Activated naive CD4-positive, alpha-beta T cell treated with anti-CD3 and anti-CD28 coated beads for 36 hours (primary cell): ENCODE measurements at regions of chr17 and their contacts with region 1.

Region 1: DNA sequence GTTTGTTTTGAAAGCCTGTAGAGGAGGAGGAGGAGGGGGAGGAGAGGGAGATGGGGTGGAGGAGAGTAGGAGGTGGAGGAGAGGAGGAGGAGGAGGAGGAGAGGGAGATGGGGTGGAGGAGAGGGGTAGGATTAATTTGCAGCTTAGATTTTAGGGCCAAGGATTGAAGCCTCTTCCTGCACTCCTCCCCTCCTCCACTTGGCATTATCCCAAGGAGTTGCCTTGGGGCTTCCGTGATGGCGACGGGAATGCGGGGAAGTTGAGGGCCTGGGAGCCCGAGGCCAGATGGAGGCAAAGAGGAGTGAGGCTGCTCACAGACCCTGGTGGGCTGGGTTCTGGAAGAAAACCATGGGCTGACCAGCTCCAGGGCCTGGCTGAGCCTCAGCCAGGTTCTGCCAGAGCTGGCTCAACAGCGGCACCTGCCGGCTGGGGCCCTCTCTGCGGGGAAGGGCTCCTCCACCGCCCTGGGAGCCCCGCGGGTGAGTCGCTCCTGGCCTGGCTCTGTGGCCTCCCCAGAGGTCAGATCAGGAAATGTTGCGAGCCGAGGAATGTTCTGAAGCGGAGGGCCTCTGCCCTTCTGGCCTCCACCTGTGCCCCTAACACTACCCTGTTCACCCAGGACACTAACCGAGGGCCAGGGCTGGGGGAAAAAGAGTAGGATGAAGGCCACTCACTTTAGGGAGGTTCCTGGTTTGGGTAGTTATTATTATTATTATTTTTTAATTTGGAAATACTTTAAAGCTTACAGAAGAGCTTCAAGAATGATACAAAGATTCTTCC is 23.9 kb upstream of the FMNL1 start:
- DNase-seq: peak; percentile 94
- H3K4me3 Mint-ChIP-seq: no peak overlapping the region
- H3K27ac Mint-ChIP-seq: no peak overlapping the region
- H3K4me1 Mint-ChIP-seq: peaks cover 3% of the 10 kb centered on the region
- H3K27me3 Mint-ChIP-seq: no peaks in the 10 kb centered on the region

Region 2: GRCh38 chr17:44878627-44879221 is 319.0 kb before region 1 on chr17:
- CTCF ChIA-PET with region 1: no interaction called
- intact Hi-C with region 1: no loop called
- DNase-seq: peak; percentile 50
- H3K4me3 Mint-ChIP-seq: no peak overlapping the region
- H3K27ac Mint-ChIP-seq: no peak overlapping the region
- H3K4me1 Mint-ChIP-seq: no peaks in the 10 kb centered on the region
- H3K27me3 Mint-ChIP-seq: no peaks in the 10 kb centered on the region

Region 3: DNA sequence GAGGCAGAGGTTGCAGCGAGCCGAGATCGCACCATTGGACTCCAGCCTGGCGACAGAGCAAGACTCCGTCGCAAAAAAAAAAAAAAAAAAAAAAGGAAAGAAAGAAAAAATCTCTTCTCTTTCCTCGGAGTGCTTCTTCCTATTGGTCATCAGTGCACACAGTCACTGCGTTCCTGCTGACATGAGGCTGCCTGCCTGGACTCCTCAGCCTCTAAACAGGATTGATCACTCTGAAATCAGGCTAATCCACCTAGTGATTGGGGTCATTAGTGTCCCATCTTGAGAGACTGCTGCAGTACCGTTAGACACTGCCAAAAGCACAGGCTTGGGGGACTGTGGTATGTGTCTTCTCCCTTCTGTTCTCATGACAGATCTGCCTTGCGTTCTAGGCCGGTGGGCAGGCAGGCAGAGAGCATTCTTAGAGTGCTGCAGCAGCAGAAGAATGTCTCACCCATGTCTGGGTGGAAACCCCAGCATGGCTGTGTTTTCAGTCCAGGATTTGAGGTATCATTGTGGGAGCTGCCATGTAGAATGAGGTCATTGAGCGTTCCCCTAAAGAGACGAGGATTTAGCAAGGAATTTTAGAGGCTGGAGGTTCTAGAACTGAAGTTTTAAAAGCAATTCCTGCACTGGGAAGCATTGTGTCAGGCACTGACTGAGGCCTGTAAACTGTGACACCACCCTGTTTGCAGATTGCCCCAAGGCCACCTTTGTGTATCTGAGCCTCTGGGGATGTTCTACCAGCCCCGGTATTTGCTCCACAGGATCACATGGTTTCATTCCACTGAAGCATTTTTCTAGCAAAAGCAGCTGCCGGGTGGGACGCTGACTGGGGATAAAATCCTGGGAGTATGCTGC is 96.0 kb before region 1 on chr17:
- CTCF ChIA-PET with region 1: no interaction called
- intact Hi-C with region 1: no loop called
- DNase-seq: no peak
- H3K4me3 Mint-ChIP-seq: no peak overlapping the region
- H3K27ac Mint-ChIP-seq: no peak overlapping the region
- H3K4me1 Mint-ChIP-seq: no peaks in the 10 kb centered on the region
- H3K27me3 Mint-ChIP-seq: no peaks in the 10 kb centered on the region

Region 4: DNA sequence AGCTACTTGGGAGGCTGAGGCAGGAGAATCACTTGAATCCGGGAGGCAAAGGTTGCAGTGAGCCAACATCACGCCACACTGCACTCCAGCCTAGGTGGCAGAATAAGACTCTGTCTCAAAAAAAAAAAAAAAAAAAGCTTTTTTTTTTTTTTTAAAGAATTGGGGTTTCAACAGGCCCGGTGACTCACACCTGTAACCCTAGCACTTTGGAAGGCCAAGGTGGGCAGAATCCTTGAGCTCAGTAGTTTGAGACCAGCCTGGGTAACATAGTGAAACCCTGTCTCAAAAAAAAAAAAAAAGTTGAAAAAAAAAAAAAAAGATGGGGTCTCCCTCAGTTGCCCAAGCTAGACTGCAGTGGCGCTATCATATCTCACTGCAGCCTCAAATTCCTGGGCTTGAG is 42.7 kb before region 1 on chr17:
- CTCF ChIA-PET with region 1: interaction called, 82 read pairs
- intact Hi-C with region 1: no loop called
- DNase-seq: no peak
- H3K4me3 Mint-ChIP-seq: no peak overlapping the region
- H3K27ac Mint-ChIP-seq: peak overlapping the region; percentile 54
- H3K4me1 Mint-ChIP-seq: peaks cover 48% of the 10 kb centered on the region
- H3K27me3 Mint-ChIP-seq: no peaks in the 10 kb centered on the region

Region 5: DNA sequence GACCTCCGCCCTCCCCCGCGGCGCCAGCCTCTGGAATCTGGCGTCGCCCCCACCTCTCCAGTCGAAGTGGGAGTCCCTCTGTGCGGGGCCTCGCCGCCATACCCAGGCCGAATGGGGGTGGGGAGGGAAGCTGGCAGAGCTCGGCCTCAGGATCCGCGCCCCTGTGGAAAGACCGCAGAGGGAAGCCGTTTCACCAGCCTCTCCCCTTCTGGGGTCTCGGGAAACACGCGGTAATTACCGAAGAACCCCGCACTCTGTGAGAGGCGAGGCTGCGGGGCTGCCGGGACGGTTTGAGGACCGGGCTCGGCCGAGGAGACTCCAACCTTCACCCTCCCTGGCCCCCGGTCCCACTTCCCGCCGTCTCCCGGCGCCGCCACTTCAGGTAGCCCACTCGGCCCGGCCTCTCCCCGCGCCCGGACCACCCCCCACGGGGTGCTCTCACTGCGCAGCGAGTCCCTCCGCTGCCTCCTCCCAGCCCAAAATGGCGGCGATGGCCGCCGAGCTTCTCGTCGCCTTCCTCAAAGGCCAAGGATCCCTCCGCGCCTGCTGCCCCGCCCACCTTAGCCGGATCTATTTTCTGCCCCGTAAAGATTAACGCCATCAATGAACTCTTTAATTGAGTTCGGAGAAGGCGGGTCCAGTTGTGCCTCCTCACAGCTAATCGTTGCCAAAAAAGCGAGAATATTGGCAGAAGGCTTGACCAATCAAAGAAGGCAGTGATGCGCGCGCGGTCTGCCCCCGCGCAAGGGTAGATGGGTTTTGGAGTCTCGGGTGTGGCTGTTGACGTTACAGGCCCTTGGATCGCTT is 36.5 kb before region 1 on chr17:
- CTCF ChIA-PET with region 1: interaction called, 22 read pairs
- intact Hi-C with region 1: no loop called
- DNase-seq: peak; percentile 99
- H3K4me3 Mint-ChIP-seq: peak overlapping the region; percentile 96
- H3K27ac Mint-ChIP-seq: peak overlapping the region; percentile 96
- H3K4me1 Mint-ChIP-seq: peaks cover 33% of the 10 kb centered on the region
- H3K27me3 Mint-ChIP-seq: no peaks in the 10 kb centered on the region

Region 6: GRCh38 chr17:45172454-45173286 is 25.1 kb before region 1 on chr17:
- CTCF ChIA-PET with region 1: interaction called, 16 read pairs
- intact Hi-C with region 1: no loop called
- DNase-seq: peak; percentile 65
- H3K4me3 Mint-ChIP-seq: peak overlapping the region; percentile 71
- H3K27ac Mint-ChIP-seq: peak overlapping the region; percentile 93
- H3K4me1 Mint-ChIP-seq: peaks cover 21% of the 10 kb centered on the region
- H3K27me3 Mint-ChIP-seq: no peaks in the 10 kb centered on the region

Region 7: DNA sequence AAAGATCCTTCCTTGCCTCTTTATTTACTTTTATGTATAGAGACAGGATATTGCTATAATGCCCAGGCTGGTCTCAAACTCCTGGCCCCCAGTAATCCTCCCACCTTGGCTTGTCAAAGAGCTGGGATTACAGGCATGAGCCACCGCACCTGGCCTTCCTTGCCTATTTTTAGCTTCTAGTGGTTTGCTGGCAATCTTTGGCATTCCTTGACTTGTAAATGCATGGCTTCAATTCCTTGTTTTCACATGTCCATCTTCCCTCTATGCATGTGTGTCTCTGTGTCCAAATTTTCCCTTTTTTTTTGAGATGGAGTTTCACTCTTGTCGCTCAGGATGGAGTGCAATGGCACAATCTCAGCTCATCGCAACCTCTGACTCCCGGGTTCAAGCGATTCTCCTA is 13.6 kb before region 1 on chr17:
- CTCF ChIA-PET with region 1: interaction called, 14 read pairs
- intact Hi-C with region 1: no loop called
- DNase-seq: no peak
- H3K4me3 Mint-ChIP-seq: no peak overlapping the region
- H3K27ac Mint-ChIP-seq: no peak overlapping the region
- H3K4me1 Mint-ChIP-seq: no peaks in the 10 kb centered on the region
- H3K27me3 Mint-ChIP-seq: no peaks in the 10 kb centered on the region

Region 8: GRCh38 chr17:45251931-45252330 is 54.2 kb after region 1 on chr17:
- CTCF ChIA-PET with region 1: no interaction called
- intact Hi-C with region 1: no loop called
- DNase-seq: no peak
- H3K4me3 Mint-ChIP-seq: no peak overlapping the region
- H3K27ac Mint-ChIP-seq: peak overlapping the region; percentile 25
- H3K4me1 Mint-ChIP-seq: peaks cover 69% of the 10 kb centered on the region
- H3K27me3 Mint-ChIP-seq: no peaks in the 10 kb centered on the region